Activated CD4-positive, alpha-beta T cell treated with anti-CD3 and anti-CD28 coated beads for 36 hours (primary cell): ENCODE measurements at regions of chr3 and their contacts with region 1.

Region 1: GRCh38 chr3:170357176-170357919 is at the start of gene SKIL:
- DNase-seq: peak; percentile 97
- ATAC-seq: peak; percentile 77
- H3K4me3 Mint-ChIP-seq: peak within 1 kb of the TSS; percentile 78
- H3K27ac Mint-ChIP-seq: peak within 1 kb of the TSS; percentile 96
- H3K4me1 Mint-ChIP-seq: peaks cover 38% of the 10 kb centered on the region
- H3K27me3 Mint-ChIP-seq: no peaks in the 10 kb centered on the region
- total RNA-seq, gene SKIL: 15.6 to 20.3 TPM

Region 2: DNA sequence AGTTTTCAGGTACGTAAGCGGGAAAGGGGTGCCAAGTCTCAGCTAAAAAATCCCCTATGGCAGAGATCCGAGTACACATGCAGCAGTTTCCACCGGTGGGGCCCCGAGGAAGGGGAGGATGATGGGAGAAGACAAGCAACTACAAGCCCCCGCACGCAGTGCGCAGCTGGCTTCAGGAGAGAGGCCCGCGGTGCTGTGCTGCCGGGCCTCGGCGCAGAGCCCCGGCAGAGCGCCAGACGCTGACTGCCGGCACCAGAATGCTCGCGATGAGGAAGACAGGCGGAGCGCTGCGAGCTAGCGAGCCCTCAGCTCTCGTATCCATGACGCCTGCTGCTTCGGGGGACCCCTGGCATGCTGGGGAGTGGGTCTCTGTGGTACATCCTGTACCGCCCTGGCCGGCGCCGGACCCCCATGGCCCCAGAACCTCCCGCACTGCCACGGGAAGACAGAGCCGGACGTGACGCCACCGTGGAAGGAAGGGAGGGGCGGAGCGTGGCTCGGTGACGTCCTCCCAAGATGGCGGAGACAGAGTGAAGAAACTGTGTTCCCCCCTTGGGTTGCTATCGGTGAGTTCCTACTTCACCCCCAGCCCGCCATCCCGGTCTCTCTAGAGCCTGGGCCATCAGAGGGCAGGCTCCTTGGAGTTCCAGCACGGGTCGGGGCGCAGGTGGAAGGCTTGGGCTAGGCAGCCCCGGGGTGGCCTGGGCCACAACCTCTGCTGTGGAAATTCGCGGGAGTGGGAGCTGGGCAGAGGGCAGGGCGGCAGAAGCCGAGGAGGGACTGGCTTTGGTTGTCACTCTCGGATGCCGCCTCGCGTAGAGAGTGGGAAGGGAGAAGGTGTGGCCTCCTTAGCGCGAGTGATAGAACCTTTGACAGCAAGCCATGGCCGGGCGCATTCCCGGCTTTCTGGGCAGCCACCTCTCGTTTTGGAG is 584.2 kb before region 1 on chr3 and contains the start of gene MYNN:
- CTCF ChIA-PET with region 1: interaction called, 4 read pairs
- POLR2A ChIA-PET with region 1: no interaction called
- intact Hi-C with region 1: loop called (anchors 1 to 10 kb)
- DNase-seq: peak; percentile 95
- ATAC-seq: peak; percentile 80
- H3K4me3 Mint-ChIP-seq: peak within 1 kb of the TSS; percentile 99
- H3K27ac Mint-ChIP-seq: peak within 1 kb of the TSS; percentile 100
- H3K4me1 Mint-ChIP-seq: peaks cover 45% of the 10 kb centered on the region
- H3K27me3 Mint-ChIP-seq: no peaks in the 10 kb centered on the region
- total RNA-seq, gene MYNN: 13.6 to 14.2 TPM

Region 3: DNA sequence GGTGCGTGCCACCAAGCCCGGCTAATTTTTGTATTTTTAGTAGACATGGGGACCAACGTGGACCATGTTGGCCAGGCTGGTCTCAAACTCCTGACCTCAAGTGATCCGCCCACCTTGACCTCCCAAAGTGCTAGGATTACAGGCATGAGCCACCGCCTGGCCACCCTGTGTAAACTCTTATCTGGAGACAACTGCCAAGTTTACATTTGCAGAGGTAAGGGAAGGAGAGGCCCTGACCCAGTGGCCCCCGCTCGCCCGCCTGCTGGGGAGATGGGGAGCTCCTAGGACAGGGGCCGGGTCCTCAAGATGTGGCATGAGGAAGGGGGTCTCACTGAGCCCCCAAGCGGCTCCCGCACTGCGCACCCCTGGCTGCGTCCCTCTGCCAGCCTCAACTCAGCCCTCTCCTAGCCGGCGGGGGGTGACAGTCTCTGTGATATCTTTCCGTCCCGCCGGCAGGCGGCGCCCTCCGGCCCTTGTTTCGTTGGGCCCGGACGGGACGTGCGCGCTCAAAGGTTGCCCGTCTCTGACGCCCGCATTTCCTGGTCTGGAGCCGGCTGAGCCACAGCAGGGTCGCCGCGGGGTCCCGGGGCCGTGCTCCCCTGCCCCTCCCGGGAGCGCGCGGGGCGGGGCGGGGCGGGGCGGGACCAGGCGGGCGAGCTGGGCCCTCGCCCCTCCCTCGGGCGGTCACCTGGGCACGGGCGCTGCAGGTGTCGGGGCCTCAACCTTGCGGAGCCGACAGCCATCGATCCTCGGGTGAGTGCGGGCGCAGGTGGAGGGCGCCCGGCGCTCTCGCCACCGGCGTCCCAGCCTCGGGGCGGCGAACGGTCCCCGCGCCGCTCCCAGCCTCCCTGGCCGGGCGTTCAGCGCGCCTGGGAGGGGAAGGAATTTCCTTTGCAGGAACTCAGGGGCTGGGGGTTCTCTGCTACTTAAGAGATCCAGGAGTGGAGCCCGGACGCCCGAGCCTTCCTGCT is 319.6 kb before region 1 on chr3 and contains the start of gene GPR160:
- CTCF ChIA-PET with region 1: no interaction called
- POLR2A ChIA-PET with region 1: no interaction called
- intact Hi-C with region 1: loop called in 1 of 2 experiments (anchors 5 kb)
- DNase-seq: peak; percentile 92
- ATAC-seq: peak; percentile 92
- H3K4me3 Mint-ChIP-seq: peak within 1 kb of the TSS; percentile 79
- H3K27ac Mint-ChIP-seq: no peak within 1 kb of the TSS
- H3K4me1 Mint-ChIP-seq: peaks cover 19% of the 10 kb centered on the region
- H3K27me3 Mint-ChIP-seq: no peaks in the 10 kb centered on the region
- total RNA-seq, gene GPR160: 9.4 to 11.1 TPM

Region 4: GRCh38 chr3:170221924-170222646 is 135.3 kb before region 1 on chr3 and contains the start of gene PRKCI:
- CTCF ChIA-PET with region 1: interaction called, 3 read pairs
- POLR2A ChIA-PET with region 1: interaction called, 5 read pairs
- intact Hi-C with region 1: loop called (anchors 1 to 2 kb)
- DNase-seq: peak; percentile 95
- ATAC-seq: peak; percentile 95
- H3K4me3 Mint-ChIP-seq: peak within 1 kb of the TSS; percentile 89
- H3K27ac Mint-ChIP-seq: peak within 1 kb of the TSS; percentile 95
- H3K4me1 Mint-ChIP-seq: peaks cover 32% of the 10 kb centered on the region
- H3K27me3 Mint-ChIP-seq: no peaks in the 10 kb centered on the region
- total RNA-seq, gene PRKCI: 32.3 to 33.0 TPM

Region 5: GRCh38 chr3:170869645-170870593 is 512.6 kb after region 1 on chr3 and contains the start of gene RPL22L1:
- CTCF ChIA-PET with region 1: no interaction called
- POLR2A ChIA-PET with region 1: no interaction called
- intact Hi-C with region 1: loop called in 1 of 2 experiments (anchors 1 kb)
- DNase-seq: peak; percentile 96
- ATAC-seq: peak; percentile 95
- H3K4me3 Mint-ChIP-seq: peak within 1 kb of the TSS; percentile 94
- H3K27ac Mint-ChIP-seq: peak within 1 kb of the TSS; percentile 99
- H3K4me1 Mint-ChIP-seq: peaks cover 15% of the 10 kb centered on the region
- H3K27me3 Mint-ChIP-seq: no peaks in the 10 kb centered on the region
- total RNA-seq, gene RPL22L1: 186 to 441 TPM

Region 6: DNA sequence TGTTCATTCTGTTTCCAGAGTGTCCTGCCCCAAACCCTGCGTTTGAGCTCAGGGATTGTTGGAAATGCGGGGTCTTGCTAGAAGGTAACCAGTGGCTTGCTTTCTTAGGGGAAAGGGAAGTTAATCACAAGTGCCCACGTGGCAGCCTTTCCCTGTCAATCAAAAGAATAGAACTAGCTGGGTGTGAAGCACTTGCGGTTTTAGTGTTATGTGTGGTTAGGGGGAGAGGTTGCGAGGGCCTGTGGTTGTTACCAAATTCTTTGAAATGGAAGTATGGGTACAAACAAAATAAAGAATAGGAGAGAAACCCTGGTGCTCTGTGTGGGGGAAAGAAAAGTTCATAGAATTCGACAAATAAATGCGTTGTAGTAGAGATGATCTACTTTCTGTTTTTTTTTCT is 1749.6 kb after region 1 on chr3:
- CTCF ChIA-PET with region 1: no interaction called
- POLR2A ChIA-PET with region 1: no interaction called
- intact Hi-C with region 1: loop called in 1 of 2 experiments (anchors 10 kb)
- DNase-seq: peak; percentile 73
- ATAC-seq: peak; percentile 57
- H3K4me3 Mint-ChIP-seq: peak overlapping the region; percentile 54
- H3K27ac Mint-ChIP-seq: peak overlapping the region; percentile 82
- H3K4me1 Mint-ChIP-seq: peaks cover 73% of the 10 kb centered on the region
- H3K27me3 Mint-ChIP-seq: no peaks in the 10 kb centered on the region